CD8-positive, alpha-beta memory T cell (primary cell): ENCODE measurements at regions of chr18 and their contacts with region 1.

Region 1: GRCh38 chr18:26383454-26384270 is 157.4 kb downstream of the TAF4B start:
- DNase-seq: peak in 1 of 5 donors; percentile 13
- H3K4me3 ChIP-seq: no peak overlapping the region
- H3K4me3 Mint-ChIP-seq: no peak overlapping the region
- H3K27ac ChIP-seq: no peak overlapping the region
- H3K27ac Mint-ChIP-seq: no peak overlapping the region
- H3K4me1 ChIP-seq: no peaks in the 10 kb centered on the region
- H3K4me1 Mint-ChIP-seq: no peaks in the 10 kb centered on the region
- H3K27me3 ChIP-seq: no peaks in the 10 kb centered on the region
- H3K27me3 Mint-ChIP-seq: no peaks in the 10 kb centered on the region

Region 2: GRCh38 chr18:26370037-26370436 is 13.6 kb before region 1 on chr18:
- CTCF ChIA-PET with region 1: interaction called, 15 read pairs
- POLR2A ChIA-PET with region 1: no interaction called
- DNase-seq: no peak
- H3K4me3 ChIP-seq: no peak overlapping the region
- H3K4me3 Mint-ChIP-seq: no peak overlapping the region
- H3K27ac ChIP-seq: no peak overlapping the region
- H3K27ac Mint-ChIP-seq: no peak overlapping the region
- H3K4me1 ChIP-seq: no peaks in the 10 kb centered on the region
- H3K4me1 Mint-ChIP-seq: no peaks in the 10 kb centered on the region
- H3K27me3 ChIP-seq: no peaks in the 10 kb centered on the region
- H3K27me3 Mint-ChIP-seq: no peaks in the 10 kb centered on the region

Region 3: DNA sequence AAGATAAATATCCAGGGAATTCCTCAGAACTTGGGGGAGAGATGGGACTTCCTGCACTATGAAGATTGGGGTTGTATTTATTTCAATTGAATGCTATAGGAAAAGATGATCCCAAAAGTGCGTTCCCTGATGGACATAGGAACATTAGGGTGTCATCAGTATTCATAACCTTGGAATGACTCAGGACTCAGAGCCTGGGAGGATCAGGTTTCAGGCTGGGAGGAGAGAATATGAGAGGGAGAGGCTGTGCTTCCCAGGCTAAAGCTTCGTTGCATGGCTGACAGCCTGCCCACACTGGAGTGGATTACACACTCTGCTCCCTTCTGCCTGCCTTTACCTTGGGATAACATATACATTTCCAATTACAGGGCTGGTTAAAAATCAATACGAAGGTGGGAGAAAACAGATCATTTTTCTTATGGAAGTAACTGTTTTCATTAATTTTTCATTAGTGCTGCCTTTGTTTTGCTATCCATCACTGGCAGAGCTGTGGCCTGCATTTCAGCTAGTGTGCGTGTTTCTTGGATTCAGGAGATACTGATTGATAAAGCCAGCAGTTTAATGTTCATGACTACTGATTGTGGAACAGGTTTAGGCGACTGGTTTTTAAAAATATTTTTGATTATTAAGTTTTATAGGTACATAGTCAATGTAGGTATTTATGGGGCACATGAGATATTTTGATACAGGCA is 46.0 kb after region 1 on chr18:
- CTCF ChIA-PET with region 1: no interaction called
- POLR2A ChIA-PET with region 1: no interaction called
- DNase-seq: no peak
- H3K4me3 ChIP-seq: no peak overlapping the region
- H3K4me3 Mint-ChIP-seq: no peak overlapping the region
- H3K27ac ChIP-seq: no peak overlapping the region
- H3K27ac Mint-ChIP-seq: no peak overlapping the region
- H3K4me1 ChIP-seq: no peaks in the 10 kb centered on the region
- H3K4me1 Mint-ChIP-seq: peaks cover 0 to 3% (median 2%) of the 10 kb centered on the region in 3 donors
- H3K27me3 ChIP-seq: no peaks in the 10 kb centered on the region
- H3K27me3 Mint-ChIP-seq: peaks cover 0 to 2% of the 10 kb centered on the region in 2 donors